ENCODE measurements at regions of chr7 and their contacts with region 1.

Region 1: DNA sequence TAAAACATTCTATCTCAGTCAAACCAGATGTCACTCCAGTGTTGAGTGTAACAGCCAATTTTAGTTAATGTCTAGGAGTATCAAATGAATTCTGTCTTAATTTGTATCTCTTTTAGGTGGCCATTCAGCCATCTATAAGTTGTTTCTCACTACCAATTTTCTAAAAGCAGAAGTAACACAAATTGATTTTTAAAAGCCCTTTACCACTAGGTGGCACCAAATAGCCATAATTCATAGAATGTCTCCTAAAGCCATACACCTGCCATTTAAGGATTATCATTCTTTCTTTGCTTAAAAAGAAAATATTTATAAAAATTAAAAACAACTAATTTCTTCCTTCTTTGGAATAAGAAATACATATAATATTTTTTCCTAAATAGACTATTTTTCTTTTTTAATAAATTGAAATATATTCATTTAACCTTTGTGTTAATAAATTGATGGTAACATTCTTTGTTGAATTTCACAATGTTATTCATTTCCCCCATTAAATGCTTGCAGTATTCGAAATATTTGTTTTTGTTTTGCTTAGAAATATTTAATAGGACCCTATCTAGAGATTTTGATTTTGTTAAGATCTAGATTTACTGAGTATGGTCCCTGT is 107.8 kb upstream of the PPP1R3A start:
- DNase-seq: peak; percentile 43
- H3K4me3 Mint-ChIP-seq: no peak overlapping the region
- H3K27ac Mint-ChIP-seq: no peak overlapping the region
- H3K4me1 Mint-ChIP-seq: peaks cover 2% of the 10 kb centered on the region
- H3K27me3 Mint-ChIP-seq: no peaks in the 10 kb centered on the region
- CTCF ChIP-seq: peak; percentile 54

Region 2: DNA sequence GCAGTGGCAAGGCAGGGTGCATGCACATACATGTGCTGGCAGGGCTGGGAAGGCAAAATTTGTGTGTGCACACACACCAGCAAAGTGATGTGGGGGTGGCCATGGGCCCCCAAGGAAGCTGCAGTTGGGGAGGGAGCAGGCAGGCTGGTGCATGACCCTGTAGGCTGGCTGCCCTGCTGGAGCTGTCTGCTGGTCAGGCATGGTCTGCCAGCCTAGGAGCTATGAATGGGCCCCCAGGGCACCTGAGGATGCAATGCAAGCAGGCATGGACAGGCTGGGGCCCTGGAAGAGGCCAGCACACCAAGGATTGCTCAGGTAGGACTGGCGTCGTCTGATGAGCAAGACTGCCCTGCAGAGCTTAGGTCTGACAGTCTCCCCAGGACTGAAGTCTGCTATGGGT is 89.6 kb before region 1 on chr7:
- CTCF ChIA-PET with region 1: no interaction called
- intact Hi-C with region 1: no loop called
- DNase-seq: no peak
- H3K4me3 Mint-ChIP-seq: no peak overlapping the region
- H3K27ac Mint-ChIP-seq: no peak overlapping the region
- H3K4me1 Mint-ChIP-seq: no peaks in the 10 kb centered on the region
- H3K27me3 Mint-ChIP-seq: peaks cover 14% of the 10 kb centered on the region
- CTCF ChIP-seq: no peak

Region 3: DNA sequence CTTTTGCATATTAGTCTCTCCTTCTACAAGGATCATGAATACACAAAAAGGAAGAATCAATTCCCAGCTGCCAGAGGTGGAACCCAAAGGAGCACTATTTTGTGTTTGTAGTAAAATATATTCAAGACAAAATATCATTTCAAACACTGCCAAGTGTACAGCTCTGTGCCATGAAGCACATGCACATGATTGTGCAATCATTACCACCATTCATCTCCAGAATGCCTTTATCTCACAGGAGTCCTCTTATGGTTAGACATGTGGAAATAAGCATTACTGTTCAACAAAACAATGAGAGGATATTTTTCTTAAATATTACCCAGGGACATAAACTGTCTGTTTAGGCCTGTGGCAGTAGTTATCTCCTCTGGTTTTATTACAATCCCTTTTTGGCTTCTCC is 43.7 kb after region 1 on chr7:
- CTCF ChIA-PET with region 1: no interaction called
- intact Hi-C with region 1: loop called (anchors 5 kb)
- DNase-seq: no peak
- H3K4me3 Mint-ChIP-seq: no peak overlapping the region
- H3K27ac Mint-ChIP-seq: no peak overlapping the region
- H3K4me1 Mint-ChIP-seq: no peaks in the 10 kb centered on the region
- H3K27me3 Mint-ChIP-seq: no peaks in the 10 kb centered on the region
- CTCF ChIP-seq: no peak

Region 4: GRCh38 chr7:114217026-114217425 is 190.4 kb after region 1 on chr7:
- CTCF ChIA-PET with region 1: no interaction called
- intact Hi-C with region 1: loop called (anchors 5 kb)
- DNase-seq: no peak
- H3K4me3 Mint-ChIP-seq: no peak overlapping the region
- H3K27ac Mint-ChIP-seq: no peak overlapping the region
- H3K4me1 Mint-ChIP-seq: no peaks in the 10 kb centered on the region
- H3K27me3 Mint-ChIP-seq: no peaks in the 10 kb centered on the region
- CTCF ChIP-seq: no peak

Region 5: DNA sequence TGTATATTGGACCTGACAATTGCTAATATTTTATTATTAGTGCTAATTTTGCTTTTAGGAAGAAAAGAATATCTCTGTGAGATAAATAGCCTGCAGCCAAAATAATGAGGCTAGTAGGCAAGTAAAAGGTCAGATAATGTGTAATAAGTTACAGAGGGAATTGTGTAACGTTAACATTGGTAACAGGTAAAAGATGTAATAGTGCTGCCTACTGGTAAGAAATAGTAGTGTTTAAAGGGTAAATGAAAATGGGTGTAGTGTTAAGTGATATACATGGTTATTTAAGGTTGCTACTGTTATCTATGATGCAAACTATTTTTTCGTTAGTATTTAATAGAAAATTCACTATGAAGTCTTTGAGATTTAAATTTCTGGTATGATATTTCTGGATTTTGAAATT is 378.8 kb after region 1 on chr7:
- CTCF ChIA-PET with region 1: interaction called, 7 read pairs
- intact Hi-C with region 1: loop called (anchors 2 kb)
- DNase-seq: no peak
- H3K4me3 Mint-ChIP-seq: no peak overlapping the region
- H3K27ac Mint-ChIP-seq: no peak overlapping the region
- H3K4me1 Mint-ChIP-seq: peaks cover 7% of the 10 kb centered on the region
- H3K27me3 Mint-ChIP-seq: no peaks in the 10 kb centered on the region
- CTCF ChIP-seq: peak; percentile 55

Region 6: GRCh38 chr7:114539575-114539974 is 513.0 kb after region 1 on chr7:
- CTCF ChIA-PET with region 1: no interaction called
- intact Hi-C with region 1: loop called (anchors 5 kb)
- DNase-seq: peak; percentile 46
- H3K4me3 Mint-ChIP-seq: no peak overlapping the region
- H3K27ac Mint-ChIP-seq: no peak overlapping the region
- H3K4me1 Mint-ChIP-seq: no peaks in the 10 kb centered on the region
- H3K27me3 Mint-ChIP-seq: no peaks in the 10 kb centered on the region
- CTCF ChIP-seq: no peak

Region 7: DNA sequence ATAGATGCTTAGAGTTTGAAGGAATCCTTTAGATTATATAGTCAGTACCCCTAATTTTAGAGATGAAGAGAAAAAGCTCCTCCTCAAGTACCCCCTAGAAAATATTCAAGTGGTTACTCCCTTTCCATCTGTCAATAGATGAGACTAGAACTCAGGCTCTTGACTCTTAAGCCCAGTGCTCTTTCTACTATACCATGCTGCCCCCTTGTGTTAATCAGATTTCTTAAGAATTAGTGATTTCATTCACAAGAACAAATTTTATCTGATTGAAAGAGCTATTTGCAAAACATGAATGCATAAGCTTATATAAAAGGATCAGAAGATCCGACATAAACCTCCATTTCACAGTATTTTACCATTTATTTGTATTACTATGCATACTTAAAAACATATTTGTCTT is 1824.7 kb after region 1 on chr7:
- CTCF ChIA-PET with region 1: no interaction called
- intact Hi-C with region 1: loop called (anchors 5 kb)
- DNase-seq: peak; percentile 6
- H3K4me3 Mint-ChIP-seq: no peak overlapping the region
- H3K27ac Mint-ChIP-seq: no peak overlapping the region
- H3K4me1 Mint-ChIP-seq: no peaks in the 10 kb centered on the region
- H3K27me3 Mint-ChIP-seq: no peaks in the 10 kb centered on the region
- CTCF ChIP-seq: peak; percentile 41

Measured in Calu3 (cell line).